ENCODE measurements at regions of chr11 and their contacts with region 1.

Region 1: DNA sequence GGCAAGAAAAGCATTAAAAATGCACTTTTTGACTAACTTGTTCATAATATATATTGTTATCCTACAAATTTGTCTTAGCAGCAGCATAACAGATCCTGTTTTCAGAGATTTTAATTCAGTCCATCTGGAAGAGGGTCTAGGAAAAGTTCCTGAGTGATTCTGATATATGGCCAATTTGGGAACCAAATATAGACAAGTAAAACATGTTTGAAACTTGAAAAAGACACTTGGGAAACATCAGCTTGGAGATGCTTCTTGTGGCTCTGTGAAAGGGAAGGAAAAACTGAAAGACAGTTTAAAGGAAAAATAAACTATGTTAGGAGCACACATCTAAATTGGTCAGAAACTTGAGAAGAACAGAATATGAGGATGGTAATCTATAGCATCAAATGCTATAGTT is 697.5 kb downstream of the CNTN5 start:
- DNase-seq: no peak
- ATAC-seq: no peak
- H3K4me3 ChIP-seq: no peak overlapping the region
- H3K27ac ChIP-seq: no peak overlapping the region
- H3K4me1 ChIP-seq: no peaks in the 10 kb centered on the region
- H3K27me3 ChIP-seq: no peaks in the 10 kb centered on the region
- CTCF ChIP-seq: no peak
- EP300 ChIP-seq: no peak
- POLR2A ChIP-seq: no peak
- RAD21 ChIP-seq: no peak

Region 2: GRCh38 chr11:99670067-99670676 is 48.1 kb before region 1 on chr11:
- CTCF ChIA-PET with region 1: no interaction called
- POLR2A ChIA-PET with region 1: no interaction called
- in situ Hi-C with region 1: no loop called
- intact Hi-C with region 1: no loop called
- DNase-seq: no peak
- ATAC-seq: no peak
- H3K4me3 ChIP-seq: no peak overlapping the region
- H3K27ac ChIP-seq: no peak overlapping the region
- H3K4me1 ChIP-seq: no peaks in the 10 kb centered on the region
- H3K27me3 ChIP-seq: no peaks in the 10 kb centered on the region
- CTCF ChIP-seq: no peak
- EP300 ChIP-seq: no peak
- POLR2A ChIP-seq: no peak
- RAD21 ChIP-seq: no peak

Region 3: GRCh38 chr11:99766811-99767210 is 48.5 kb after region 1 on chr11:
- CTCF ChIA-PET with region 1: no interaction called
- POLR2A ChIA-PET with region 1: no interaction called
- in situ Hi-C with region 1: no loop called
- intact Hi-C with region 1: loop called (anchors 1 kb)
- DNase-seq: no peak
- ATAC-seq: no peak
- H3K4me3 ChIP-seq: no peak overlapping the region
- H3K27ac ChIP-seq: no peak overlapping the region
- H3K4me1 ChIP-seq: no peaks in the 10 kb centered on the region
- H3K27me3 ChIP-seq: no peaks in the 10 kb centered on the region
- CTCF ChIP-seq: no peak
- EP300 ChIP-seq: no peak
- POLR2A ChIP-seq: no peak
- RAD21 ChIP-seq: no peak